Dorsolateral prefrontal cortex (tissue), 120 donors: ENCODE measurements at regions of chr17 and their contacts with region 1.

Region 1: GRCh38 chr17:66301797-66302741 is at the start of gene PRKCA:
- DNase-seq: peak; percentile 43 to 83 (median 63)
- H3K4me3 ChIP-seq: peak within 1 kb of the TSS; percentile 61 to 97 (median 89)
- H3K27ac ChIP-seq: peak within 1 kb of the TSS in 58 of 59 donors; percentile 2 to 91 (median 79)
- H3K27me3 ChIP-seq: no peaks in the 10 kb centered on the region
- CTCF ChIP-seq: no peak
- total RNA-seq, gene PRKCA: 90.6 to 208 (median 152) TPM

Region 2: DNA sequence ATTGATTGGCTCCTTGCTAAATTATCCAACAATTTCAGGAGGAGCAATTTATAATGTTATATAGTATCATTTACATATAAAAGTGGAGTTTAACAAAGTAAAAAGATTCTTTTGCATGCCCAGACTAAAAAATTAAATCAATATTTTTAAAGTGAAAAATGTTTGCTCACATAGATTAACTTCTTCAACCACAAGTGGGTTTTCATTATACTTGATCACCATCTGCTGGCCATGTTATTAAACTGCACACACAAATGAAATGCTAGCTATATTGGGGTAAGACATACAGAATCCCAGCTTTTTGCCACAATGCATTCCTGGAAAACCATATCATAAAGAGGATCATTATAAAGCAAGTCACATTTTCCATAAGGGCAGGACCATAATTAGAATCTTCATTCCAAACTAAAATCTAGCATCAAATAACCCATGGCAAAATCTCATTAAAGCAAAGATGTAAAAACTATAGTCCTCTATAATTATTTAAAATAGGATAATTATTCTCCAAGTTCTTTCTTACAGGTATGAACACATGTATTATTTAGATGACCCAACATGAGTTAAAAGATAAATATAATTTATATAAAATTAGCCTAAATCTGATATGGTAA is 136.5 kb before region 1 on chr17:
- intact Hi-C with region 1: no loop called
- DNase-seq: no peak
- H3K4me3 ChIP-seq: no peak overlapping the region
- H3K27ac ChIP-seq: no peak overlapping the region
- H3K27me3 ChIP-seq: no peaks in the 10 kb centered on the region
- CTCF ChIP-seq: peak; percentile 59 to 93 (median 81)

Region 3: DNA sequence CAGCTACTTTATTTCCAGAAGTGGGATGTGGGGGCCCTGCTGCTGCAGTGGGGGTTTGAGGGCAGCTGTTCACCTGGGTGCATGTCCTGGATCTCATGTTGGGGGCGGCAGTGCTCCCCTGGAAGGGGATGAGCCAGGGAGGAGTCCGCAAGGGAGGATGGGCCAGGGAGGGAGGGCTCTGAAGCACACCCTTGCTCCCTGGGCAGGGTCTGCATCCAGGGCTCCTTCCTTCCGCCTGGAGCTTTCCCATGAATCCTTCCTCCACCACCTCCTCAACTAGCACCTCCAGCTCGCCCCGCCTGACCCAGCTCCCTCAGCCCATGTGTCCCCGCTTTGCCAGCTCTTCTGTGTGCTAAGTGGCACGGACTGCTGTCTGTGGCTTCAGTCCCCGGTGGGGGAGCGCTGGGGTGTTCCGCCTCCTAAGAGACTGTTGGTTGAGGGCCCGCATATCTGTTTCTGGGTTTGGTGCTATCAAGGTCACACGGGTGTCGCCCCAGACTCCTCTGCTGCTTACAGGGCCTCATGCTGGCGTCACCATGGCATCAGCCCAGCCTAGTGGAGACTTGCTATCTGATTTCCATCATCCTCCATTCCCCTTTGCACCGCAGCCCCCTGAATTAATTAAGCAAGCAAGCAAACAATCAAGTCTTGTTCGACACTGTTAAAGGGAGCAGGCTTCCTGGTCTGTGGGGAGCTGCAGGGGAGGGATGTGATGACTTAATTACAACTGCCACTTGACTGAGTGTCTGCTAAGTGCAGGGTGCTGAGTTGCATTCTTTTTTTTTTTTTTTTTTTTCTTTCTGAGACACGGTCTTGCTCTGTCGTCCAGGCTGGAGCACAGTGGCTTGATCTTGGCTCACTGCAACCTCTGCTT is 72.1 kb after region 1 on chr17:
- intact Hi-C with region 1: loop called in 1 of 2 experiments (anchors 5 kb)
- DNase-seq: peak in 7 of 10 donors; percentile 10 to 47 (median 34)
- H3K4me3 ChIP-seq: peak overlapping the region in 38 of 59 donors; percentile 4 to 55 (median 31)
- H3K27ac ChIP-seq: peak overlapping the region in 21 of 59 donors; percentile 5 to 71 (median 38)
- H3K27me3 ChIP-seq: no peaks in the 10 kb centered on the region
- CTCF ChIP-seq: peak in 1 of 56 donors; percentile 6

Region 4: DNA sequence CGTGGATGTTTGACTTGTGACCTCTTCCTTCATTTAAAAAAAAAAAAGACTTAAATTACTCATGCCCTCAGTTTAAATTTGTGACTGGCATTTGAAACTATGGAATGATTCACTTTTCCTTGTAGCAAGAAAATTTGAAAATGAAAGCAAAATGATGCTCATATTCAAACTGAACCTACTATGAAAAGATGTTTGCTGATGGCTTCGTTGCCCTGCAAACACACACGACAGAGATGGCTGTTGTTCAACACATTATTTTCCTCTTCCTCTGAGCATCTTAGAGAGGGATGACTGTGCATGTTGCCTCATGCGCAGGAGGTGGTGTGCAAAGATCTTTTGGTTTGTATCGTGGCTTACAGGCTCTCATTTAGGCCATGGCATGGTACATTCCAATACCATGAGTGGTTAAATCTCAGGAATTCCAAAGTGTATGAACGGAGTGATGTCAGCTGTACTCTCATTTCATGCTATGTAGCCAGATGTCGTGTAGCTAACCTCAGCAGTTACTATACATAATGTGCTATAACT is 164.8 kb after region 1 on chr17:
- intact Hi-C with region 1: loop called in 1 of 2 experiments (anchors 10 kb)
- DNase-seq: no peak
- H3K4me3 ChIP-seq: peak overlapping the region in 7 of 59 donors; percentile 1 to 31 (median 15)
- H3K27ac ChIP-seq: peak overlapping the region in 28 of 59 donors; percentile 6 to 60 (median 34)
- H3K27me3 ChIP-seq: no peaks in the 10 kb centered on the region
- CTCF ChIP-seq: no peak

Region 5: GRCh38 chr17:66481271-66481670 is 179.2 kb after region 1 on chr17:
- intact Hi-C with region 1: no loop called
- DNase-seq: no peak
- H3K4me3 ChIP-seq: no peak overlapping the region
- H3K27ac ChIP-seq: no peak overlapping the region
- H3K27me3 ChIP-seq: no peaks in the 10 kb centered on the region
- CTCF ChIP-seq: no peak

Region 6: DNA sequence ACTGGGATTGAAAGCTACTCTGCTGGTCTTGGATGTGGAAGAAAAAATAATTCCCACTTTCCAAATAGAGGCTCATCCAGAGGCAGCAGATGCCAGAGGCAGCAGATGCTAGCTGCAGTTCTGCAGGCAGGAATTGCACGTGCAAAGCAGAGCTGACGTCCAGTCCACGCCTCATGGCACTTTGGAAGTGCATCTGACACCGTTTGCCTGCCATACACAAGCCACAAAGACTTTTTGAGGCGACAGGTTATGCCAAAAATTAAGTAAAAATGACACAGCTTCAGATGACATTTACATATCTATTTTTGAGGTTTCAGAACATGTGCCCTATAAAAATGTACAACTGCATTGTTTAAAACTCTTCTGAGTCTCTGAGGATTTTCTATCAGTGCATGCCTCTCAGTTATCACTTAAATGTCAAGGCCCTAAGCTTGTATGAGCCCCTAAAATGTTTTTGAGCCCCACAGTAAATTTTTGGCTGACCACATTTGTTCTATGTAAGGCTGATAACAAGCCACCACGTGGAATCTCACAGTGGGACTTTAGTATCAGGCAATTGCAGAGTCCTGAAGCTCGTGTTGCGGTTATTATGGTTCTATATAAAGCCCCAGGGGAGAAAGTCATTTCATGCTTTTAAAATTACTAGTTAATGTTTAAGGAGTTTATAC is 239.5 kb after region 1 on chr17:
- intact Hi-C with region 1: loop called (anchors 5 kb)
- DNase-seq: peak in 3 of 10 donors; percentile 52 to 61 (median 56)
- H3K4me3 ChIP-seq: peak overlapping the region in 4 of 59 donors; percentile 18 to 47 (median 28)
- H3K27ac ChIP-seq: peak overlapping the region; percentile 83 to 98 (median 95)
- H3K27me3 ChIP-seq: no peaks in the 10 kb centered on the region
- CTCF ChIP-seq: no peak

Region 7: GRCh38 chr17:66673668-66674315 is 371.7 kb after region 1 on chr17:
- intact Hi-C with region 1: loop called in 1 of 2 experiments (anchors 5 kb)
- DNase-seq: peak in 6 of 10 donors; percentile 35 to 64 (median 53)
- H3K4me3 ChIP-seq: peak overlapping the region in 1 of 59 donors; percentile 4
- H3K27ac ChIP-seq: peak overlapping the region in 54 of 59 donors; percentile 3 to 95 (median 81)
- H3K27me3 ChIP-seq: no peaks in the 10 kb centered on the region
- CTCF ChIP-seq: peak; percentile 66 to 92 (median 82)